ENCODE measurements at regions of chr7 and their contacts with region 1.

Region 1: DNA sequence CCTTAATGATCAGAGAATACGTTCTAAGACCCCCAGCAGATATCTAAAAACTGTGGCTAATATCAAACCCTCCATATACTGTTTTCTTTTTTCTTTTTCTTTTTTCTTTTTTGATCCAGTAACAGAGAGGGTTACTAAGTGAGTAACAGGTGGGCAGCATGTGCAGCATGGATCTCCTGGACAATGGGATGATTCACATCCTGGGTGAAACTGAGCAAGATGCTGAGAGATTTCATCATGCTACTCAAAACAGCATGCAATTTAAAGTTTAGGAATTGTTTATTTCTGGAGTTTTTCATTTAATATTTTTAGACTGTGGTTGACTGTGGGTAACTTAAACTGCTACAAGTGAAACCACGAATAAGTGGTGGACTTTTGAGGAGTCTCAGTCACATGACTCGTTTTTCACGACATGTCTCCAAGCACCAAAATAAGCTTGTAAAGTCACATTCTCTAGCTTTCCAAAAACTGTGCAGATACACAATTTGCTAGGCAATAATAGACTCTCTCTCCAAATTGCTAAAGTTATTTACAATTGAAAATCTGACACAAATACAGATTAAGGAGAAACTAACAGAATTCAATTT is 716.2 kb downstream of the NXPH1 start:
- DNase-seq: no peak
- ATAC-seq: no peak
- H3K4me3 ChIP-seq: no peak overlapping the region
- H3K27ac ChIP-seq: no peak overlapping the region
- H3K4me1 ChIP-seq: no peaks in the 10 kb centered on the region
- H3K27me3 ChIP-seq: no peaks in the 10 kb centered on the region
- CTCF ChIP-seq: no peak
- POLR2A ChIP-seq: no peak
- RAD21 ChIP-seq: no peak

Region 2: GRCh38 chr7:9102846-9103245 is 46.7 kb before region 1 on chr7:
- CTCF ChIA-PET with region 1: no interaction called
- POLR2A ChIA-PET with region 1: no interaction called
- RAD21 ChIA-PET with region 1: no interaction called
- intact Hi-C with region 1: loop called (anchors 2 kb)
- DNase-seq: no peak
- ATAC-seq: no peak
- H3K4me3 ChIP-seq: no peak overlapping the region
- H3K27ac ChIP-seq: no peak overlapping the region
- H3K4me1 ChIP-seq: no peaks in the 10 kb centered on the region
- H3K27me3 ChIP-seq: no peaks in the 10 kb centered on the region
- CTCF ChIP-seq: no peak
- POLR2A ChIP-seq: no peak
- RAD21 ChIP-seq: no peak